GM23248 (cell line): ENCODE measurements at regions of chr6 and their contacts with region 1.

Region 1: DNA sequence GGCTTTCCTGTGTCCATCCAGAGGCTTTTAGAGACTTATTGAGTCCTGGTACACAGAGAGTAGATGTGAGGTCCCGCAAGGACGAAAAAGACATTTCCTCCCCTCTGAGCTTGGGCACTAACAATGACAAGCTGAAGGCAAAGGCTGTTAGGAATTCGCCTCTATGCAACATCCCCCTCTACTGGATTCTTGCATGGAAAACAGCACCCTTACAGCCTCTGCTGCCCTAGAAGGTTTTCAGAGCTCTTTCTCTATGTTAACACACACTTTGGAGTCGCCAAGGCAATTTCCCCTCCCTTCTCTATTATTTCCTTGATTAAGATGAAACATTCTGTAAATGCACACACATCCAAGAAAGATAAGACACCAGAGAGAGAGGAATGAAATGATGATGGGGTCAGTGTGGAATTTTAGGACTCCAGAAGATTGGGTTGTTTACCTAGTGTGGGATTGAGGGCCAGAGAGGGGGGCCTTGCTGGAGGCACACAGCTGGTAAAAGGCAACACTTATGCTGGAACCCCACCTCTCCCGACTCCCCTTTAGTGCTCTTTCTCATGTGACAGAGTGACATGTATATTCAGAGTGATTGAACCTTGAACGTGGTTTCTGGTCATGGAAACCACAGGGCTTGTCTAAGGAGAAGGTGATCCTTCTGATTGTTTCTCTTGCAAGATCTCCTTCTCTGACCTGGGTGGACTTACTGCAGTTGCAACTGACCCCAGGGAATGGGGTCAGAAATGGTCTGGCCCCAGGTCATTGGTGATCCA is 300.7 kb downstream of the CLIC5 start:
- DNase-seq: peak; percentile 86
- H3K4me3 ChIP-seq: no peak overlapping the region
- H3K27ac ChIP-seq: no peak overlapping the region
- H3K4me1 ChIP-seq: peaks cover 41% of the 10 kb centered on the region
- H3K27me3 ChIP-seq: no peaks in the 10 kb centered on the region

Region 2: GRCh38 chr6:44475779-44476434 is 1239.0 kb before region 1 on chr6:
- in situ Hi-C with region 1: loop called (anchors 25 kb)
- DNase-seq: peak; percentile 85
- H3K4me3 ChIP-seq: no peak overlapping the region
- H3K27ac ChIP-seq: no peak overlapping the region
- H3K4me1 ChIP-seq: no peaks in the 10 kb centered on the region
- H3K27me3 ChIP-seq: no peaks in the 10 kb centered on the region

Region 3: DNA sequence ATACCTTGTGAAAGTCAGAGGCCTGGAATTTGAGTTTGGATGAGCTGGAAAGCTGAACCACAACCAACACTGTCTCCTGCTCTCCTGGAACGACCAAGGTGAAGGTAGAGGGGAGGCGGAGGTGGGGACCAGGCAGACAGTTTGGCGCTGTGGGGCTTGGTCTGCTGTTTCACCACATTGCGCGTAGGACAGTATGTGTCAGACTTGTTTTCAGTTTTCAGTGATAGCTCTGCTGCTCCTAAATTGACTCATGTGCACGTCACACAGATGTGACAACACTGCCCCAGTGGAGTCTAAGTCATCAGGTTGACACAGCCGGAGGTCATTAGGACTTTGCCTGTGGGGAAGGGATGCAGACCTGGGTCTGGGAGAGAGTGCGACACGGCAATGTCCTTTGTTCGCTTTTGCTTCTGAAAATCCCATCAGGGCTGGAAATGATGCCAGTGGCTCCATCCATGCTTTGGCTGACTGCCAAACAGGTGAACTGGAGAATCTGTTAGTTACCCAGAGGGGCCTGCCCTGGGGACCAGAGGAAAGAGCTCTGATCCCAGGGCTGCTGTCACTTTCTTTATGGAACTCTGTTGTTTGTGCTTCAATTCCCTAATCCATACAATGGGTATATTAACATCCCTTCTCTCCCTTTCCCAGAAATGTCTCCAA is 1071.9 kb before region 1 on chr6:
- in situ Hi-C with region 1: loop called (anchors 10 kb)
- DNase-seq: peak; percentile 61
- H3K4me3 ChIP-seq: no peak overlapping the region
- H3K27ac ChIP-seq: peak overlapping the region; percentile 23; the same call in 1 of the 2 replicates
- H3K4me1 ChIP-seq: peaks cover 9% of the 10 kb centered on the region
- H3K27me3 ChIP-seq: no peaks in the 10 kb centered on the region

Region 4: GRCh38 chr6:44960898-44961297 is 754.0 kb before region 1 on chr6:
- in situ Hi-C with region 1: no loop called
- DNase-seq: peak; percentile 22
- H3K4me3 ChIP-seq: no peak overlapping the region
- H3K27ac ChIP-seq: no peak overlapping the region
- H3K4me1 ChIP-seq: 0 out of 2 replicates have a peak, but pooled peaks cover 7% of the 10 kb centered on the region
- H3K27me3 ChIP-seq: no peaks in the 10 kb centered on the region

Region 5: GRCh38 chr6:45445749-45446549 is 269.0 kb before region 1 on chr6:
- in situ Hi-C with region 1: loop called (anchors 25 kb)
- DNase-seq: peak; percentile 98
- H3K4me3 ChIP-seq: peak overlapping the region; percentile 38
- H3K27ac ChIP-seq: peak overlapping the region; percentile 74
- H3K4me1 ChIP-seq: peaks cover 42% of the 10 kb centered on the region
- H3K27me3 ChIP-seq: no peaks in the 10 kb centered on the region